ENCODE measurements at regions of chr1 and their contacts with region 1.

Region 1: DNA sequence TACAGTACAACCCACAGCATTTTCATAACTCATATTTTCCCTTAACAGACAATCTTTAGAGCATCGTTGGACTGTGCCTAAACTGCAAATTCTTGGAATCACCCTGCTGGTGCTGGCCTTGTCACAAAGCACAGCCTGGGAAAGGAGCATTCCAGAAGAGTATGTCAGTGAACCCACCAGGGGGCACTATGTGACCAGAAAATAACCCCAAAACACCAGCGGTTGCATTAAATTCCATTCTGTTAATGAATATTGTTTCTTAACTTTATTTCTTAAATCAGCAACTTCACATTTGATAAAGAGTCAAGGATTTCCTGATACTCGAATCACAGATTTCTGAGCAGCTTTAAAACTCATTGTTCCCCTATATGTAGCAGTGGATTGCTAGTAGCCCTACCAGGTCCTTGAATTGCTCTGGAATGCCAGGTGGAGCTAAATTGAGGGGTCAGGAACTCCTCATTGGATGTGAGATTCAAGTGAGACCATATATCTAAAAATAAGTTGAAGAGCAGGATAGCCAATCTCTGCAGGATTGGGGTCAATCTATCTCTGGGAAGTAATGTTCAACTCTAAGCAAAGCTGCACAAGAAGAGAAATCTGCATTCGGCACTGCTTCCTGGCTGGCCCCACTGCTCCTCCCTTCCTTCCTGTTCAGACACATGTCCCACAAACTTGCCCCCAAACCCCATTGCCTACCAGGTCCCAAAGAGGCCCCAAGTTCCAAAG is 12.7 kb upstream of the RAB4A start:
- DNase-seq: peak; percentile 23
- H3K4me3 Mint-ChIP-seq: no peak overlapping the region
- H3K27ac Mint-ChIP-seq: no peak overlapping the region
- H3K4me1 Mint-ChIP-seq: peaks cover 29% of the 10 kb centered on the region
- H3K27me3 Mint-ChIP-seq: peaks cover 11% of the 10 kb centered on the region

Region 2: DNA sequence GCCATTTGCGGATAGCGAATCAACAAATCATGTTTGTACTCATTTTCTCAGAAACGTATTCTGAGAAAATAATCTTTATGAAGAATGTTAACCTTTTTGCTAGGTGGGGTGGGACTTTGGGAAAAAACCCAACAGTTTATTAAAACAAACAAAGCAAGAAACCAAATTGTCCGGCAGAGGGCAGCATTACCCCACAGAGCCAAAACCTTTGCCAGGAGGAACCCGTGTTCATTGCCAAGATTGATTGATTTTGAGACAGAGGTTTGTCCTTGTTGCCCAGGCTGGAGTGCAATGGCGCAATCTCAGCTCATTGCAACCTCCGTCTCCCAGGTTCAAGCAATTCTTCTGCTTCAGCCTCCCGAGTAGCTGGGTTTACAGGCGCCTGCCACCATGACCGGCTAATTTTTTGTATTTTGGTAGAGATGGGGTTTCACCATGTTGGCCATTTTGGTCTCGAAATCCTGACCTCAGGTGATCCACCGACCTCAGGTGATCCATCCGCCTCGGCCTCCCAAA is 593.7 kb before region 1 on chr1:
- intact Hi-C with region 1: loop called (anchors 1 kb)
- DNase-seq: peak; percentile 55
- H3K4me3 Mint-ChIP-seq: no peak overlapping the region
- H3K27ac Mint-ChIP-seq: no peak overlapping the region
- H3K4me1 Mint-ChIP-seq: no peaks in the 10 kb centered on the region
- H3K27me3 Mint-ChIP-seq: peaks cover 15% of the 10 kb centered on the region

Region 3: GRCh38 chr1:229270547-229271447 is 12.6 kb after region 1 on chr1 and contains the start of gene RAB4A:
- intact Hi-C with region 1: loop called (anchors 1 kb)
- DNase-seq: peak; percentile 78
- H3K4me3 Mint-ChIP-seq: peak within 1 kb of the TSS; percentile 91
- H3K27ac Mint-ChIP-seq: peak within 1 kb of the TSS; percentile 82
- H3K4me1 Mint-ChIP-seq: peaks cover 19% of the 10 kb centered on the region
- H3K27me3 Mint-ChIP-seq: peaks cover 2% of the 10 kb centered on the region
- total RNA-seq, gene RAB4A: 29.0 and 29.3 TPM in 2 replicates

Region 4: DNA sequence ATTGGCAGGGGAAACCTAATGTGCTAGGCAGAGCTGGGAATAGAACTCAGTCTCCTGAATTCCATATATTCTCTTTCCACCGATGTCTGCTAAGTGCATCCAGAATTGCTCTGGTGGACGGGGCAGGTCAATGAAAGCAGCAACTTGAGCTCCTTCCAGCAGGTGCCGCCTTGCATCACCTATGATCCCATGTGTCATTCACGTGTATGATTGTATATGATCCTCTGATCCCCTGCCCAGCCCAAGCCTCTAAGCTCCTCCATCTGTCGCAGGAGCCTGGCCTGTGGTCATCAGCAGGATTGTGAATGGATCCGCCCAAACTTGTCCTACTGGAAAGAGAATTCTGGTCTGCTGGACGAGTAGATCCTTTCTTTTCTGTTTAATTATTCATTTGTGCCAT is 162.6 kb after region 1 on chr1:
- intact Hi-C with region 1: no loop called
- DNase-seq: no peak
- H3K4me3 Mint-ChIP-seq: no peak overlapping the region
- H3K27ac Mint-ChIP-seq: no peak overlapping the region
- H3K4me1 Mint-ChIP-seq: no peaks in the 10 kb centered on the region
- H3K27me3 Mint-ChIP-seq: peaks cover 26% of the 10 kb centered on the region

Region 5: DNA sequence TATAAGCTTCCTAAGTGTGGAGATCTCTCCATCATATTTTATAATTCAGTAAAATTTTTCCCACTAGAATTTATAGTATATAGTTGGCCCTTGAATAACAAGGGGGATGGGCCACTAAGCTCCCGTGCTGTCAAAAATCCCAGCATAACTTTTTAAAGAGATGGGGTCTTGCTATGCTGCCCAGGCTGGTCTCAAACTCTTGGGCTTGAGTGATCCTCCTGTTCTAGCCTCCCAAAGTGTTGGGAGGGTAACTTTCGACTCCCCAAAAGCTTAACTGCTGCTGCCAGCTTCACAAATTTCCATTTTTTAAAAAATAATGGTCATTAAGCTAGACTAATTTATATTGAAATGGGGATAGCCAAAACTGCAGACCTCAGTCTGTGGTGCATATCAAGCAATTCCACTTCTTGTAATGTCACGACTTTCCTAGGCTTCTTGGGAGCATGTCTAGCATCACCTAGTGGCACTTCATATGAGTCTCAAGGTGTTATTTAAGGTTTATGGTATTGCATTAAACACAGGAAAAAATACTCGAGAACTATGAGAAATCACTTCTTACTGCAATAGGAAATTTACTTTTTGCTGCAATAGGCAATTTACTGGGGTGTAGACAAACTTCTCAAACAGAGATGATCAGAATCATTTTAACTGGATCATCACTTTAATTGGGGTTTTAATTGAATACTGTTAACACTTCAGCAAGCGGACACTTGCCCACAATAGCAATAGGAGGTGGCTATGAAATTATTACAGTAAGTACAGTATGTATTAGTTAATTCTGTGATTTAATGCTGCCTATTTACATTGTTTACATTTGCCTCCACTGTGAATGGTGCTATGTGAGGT is 195.0 kb after region 1 on chr1:
- intact Hi-C with region 1: loop called (anchors 1 kb)
- DNase-seq: no peak
- H3K4me3 Mint-ChIP-seq: no peak overlapping the region
- H3K27ac Mint-ChIP-seq: no peak overlapping the region
- H3K4me1 Mint-ChIP-seq: peaks cover 7% of the 10 kb centered on the region
- H3K27me3 Mint-ChIP-seq: no peaks in the 10 kb centered on the region

Region 6: GRCh38 chr1:229514578-229515275 is 256.5 kb after region 1 on chr1:
- intact Hi-C with region 1: loop called (anchors 1 kb)
- DNase-seq: peak; percentile 34
- H3K4me3 Mint-ChIP-seq: no peak overlapping the region
- H3K27ac Mint-ChIP-seq: no peak overlapping the region
- H3K4me1 Mint-ChIP-seq: peaks cover 8% of the 10 kb centered on the region
- H3K27me3 Mint-ChIP-seq: peaks cover 2% of the 10 kb centered on the region

Region 7: GRCh38 chr1:230310381-230311163 is 1052.4 kb after region 1 on chr1:
- intact Hi-C with region 1: loop called (anchors 1 kb)
- DNase-seq: peak; percentile 43
- H3K4me3 Mint-ChIP-seq: no peak overlapping the region
- H3K27ac Mint-ChIP-seq: no peak overlapping the region
- H3K4me1 Mint-ChIP-seq: peaks cover 4% of the 10 kb centered on the region
- H3K27me3 Mint-ChIP-seq: peaks cover 14% of the 10 kb centered on the region